Heart right ventricle (tissue), 16 donors: ENCODE measurements at regions of chr12 and their contacts with region 1.

Region 1: DNA sequence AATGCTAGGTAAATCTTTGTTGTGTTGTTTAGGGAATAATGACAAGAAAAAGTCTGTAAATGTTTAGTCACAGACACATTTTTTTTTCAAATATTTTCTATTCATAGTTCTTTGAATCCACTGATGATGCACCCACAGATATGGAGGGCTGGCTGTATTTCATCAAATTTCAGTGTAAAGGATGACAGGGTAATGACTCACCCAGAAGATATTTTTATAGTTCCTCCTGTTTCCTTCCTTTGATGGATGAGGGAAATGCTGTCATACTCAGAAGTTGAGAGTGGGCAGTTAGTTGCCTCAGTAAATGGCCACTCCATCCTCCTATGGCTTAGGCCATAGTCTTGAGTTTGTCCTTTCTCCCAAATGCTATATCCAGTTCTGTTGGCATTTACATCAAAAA is 76.9 kb upstream of the REP15 start:
- DNase-seq: no peak
- ATAC-seq: peak in 5 of 8 donors; percentile 32 to 75 (median 68)
- H3K4me3 ChIP-seq: no peak overlapping the region
- H3K27ac ChIP-seq: peak overlapping the region in 1 of 10 donors; percentile 39
- H3K4me1 ChIP-seq: peaks cover 10 to 97% (median 72%) of the 10 kb centered on the region in 9 donors
- H3K27me3 ChIP-seq: no peaks in the 10 kb centered on the region
- CTCF ChIP-seq: no peak

Region 2: DNA sequence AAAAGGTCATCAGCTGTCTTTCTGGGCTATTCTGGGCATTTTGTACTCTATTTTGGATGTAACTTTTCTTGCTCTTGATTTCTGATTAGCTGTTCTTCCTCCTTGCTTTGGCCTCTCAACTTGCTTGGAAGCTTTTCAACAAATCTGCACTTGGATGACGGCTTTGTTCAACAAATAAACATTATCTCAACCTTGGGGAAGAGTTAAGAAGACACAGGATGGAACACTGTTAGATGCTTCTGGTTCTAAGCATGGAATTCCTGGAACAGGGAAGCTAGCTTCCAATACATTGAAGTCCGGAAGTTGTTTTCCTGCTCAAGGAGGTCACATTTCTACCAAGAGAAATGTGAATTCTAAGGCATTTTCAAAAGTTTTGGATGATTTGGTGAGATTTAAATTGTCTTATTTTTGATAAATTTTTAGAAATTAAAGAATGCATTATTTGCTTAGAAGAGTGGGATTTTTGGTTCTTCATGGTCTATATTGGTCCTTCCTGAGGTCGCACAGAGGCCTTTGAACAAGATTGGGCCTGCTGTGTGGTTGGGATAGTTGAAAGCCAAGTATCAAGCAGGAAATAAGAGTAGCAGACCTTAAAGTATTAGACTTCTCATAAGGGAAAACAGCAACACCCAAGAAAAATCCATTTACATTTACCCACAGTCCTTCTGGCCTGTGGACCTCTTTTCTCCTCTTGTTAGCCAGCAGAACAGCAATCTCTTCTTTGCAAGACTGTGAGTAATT is 36.1 kb before region 1 on chr12:
- intact Hi-C with region 1: loop called in 1 of 10 experiments (anchors 5 kb)
- DNase-seq: peak in 1 of 2 donors; percentile 68
- ATAC-seq: peak; percentile 54 to 82 (median 76)
- H3K4me3 ChIP-seq: no peak overlapping the region
- H3K27ac ChIP-seq: peak overlapping the region; percentile 57 to 89 (median 70)
- H3K4me1 ChIP-seq: peaks cover 25 to 92% (median 82%) of the 10 kb centered on the region in 9 donors
- H3K27me3 ChIP-seq: no peaks in the 10 kb centered on the region
- CTCF ChIP-seq: no peak